Activated CD4-positive, alpha-beta T cell treated with anti-CD3 and anti-CD28 coated beads, Interleukin-2, amount 10 ng/mL, durations not matched to agents 24 days and 14 days (primary cell): ENCODE measurements at regions of chr10 and their contacts with region 1.

Region 1: DNA sequence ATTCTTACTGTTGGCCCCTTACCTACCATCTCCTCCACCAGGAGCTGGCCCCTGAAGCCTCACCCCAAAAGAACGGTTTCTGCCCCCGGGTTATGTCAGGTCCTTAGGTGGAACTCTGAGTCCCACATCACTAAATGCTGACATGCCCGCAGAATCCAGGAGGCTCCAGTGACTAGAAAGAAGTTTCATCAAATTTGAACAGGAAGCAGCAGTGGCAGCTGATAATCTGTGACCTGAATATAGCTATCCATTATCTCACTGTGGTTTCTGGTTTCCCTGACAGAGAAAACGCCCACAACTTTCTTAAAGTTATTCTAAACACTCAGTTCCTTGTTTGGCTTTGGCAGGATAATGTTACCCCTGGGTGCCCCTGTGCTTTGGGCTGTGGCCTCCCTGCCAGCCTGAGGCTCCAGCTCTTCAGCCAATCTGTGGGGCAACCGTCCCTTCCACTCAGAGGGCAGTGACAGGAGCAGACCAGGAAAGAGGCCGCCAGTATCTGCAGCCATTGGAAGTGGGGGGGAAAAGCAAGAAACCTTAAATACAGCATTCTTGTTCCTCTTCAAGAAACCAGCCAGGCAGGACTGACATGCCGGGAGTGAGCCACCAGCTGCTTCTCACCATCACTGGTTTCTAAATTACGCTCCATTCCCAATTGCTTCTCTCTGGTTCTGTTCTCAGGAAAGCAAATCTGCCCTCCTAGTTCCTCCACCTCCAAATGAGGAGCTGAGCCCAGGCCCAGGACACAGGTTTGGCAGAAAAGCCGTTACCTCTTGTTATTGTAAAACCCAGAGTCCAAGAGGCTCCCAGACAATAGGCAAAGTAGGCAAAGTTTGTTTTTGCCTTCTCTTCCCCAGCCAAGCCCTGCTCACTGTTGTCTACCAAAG is 41.2 kb upstream of the VCL start:
- DNase-seq: peak; percentile 80
- H3K4me3 Mint-ChIP-seq: peak overlapping the region; percentile 78
- H3K27ac Mint-ChIP-seq: peak overlapping the region; percentile 86
- H3K4me1 Mint-ChIP-seq: peaks cover 47% of the 10 kb centered on the region
- H3K27me3 Mint-ChIP-seq: peaks cover 2% of the 10 kb centered on the region

Region 2: DNA sequence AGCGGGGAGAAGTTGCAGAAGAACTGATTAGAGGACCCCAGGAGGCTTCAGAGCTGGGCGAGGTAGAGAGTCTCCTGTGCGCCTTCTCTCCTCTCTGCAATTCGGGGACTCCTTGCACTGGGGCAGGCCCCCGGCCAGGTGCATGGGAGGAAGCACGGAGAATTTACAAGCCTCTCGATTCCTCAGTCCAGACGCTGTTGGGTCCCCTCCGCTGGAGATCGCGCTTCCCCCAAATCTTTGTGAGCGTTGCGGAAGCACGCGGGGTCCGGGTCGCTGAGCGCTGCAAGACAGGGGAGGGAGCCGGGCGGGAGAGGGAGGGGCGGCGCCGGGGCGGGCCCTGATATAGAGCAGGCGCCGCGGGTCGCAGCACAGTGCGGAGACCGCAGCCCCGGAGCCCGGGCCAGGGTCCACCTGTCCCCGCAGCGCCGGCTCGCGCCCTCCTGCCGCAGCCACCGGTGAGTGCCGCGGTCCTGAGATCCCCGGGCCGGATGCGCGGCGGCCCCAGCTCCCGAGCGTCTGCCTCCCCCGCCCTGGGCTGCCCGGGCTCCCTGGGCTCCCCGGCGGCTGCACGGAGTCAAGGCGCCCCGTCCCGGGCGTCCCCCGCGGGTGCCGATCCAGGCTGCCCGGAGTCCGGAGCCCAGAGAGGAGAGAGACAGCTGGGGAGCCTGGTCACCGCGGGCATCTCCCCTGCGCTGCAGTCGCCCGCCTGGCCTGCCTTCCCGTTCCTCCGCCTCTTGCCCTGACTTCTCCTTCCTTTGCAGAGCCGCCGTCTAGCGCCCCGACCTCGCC is 45.8 kb before region 1 on chr10 and contains the start of gene PLAU:
- intact Hi-C with region 1: loop called (anchors 5 kb)
- DNase-seq: peak; percentile 84
- H3K4me3 Mint-ChIP-seq: peak within 1 kb of the TSS; percentile 90
- H3K27ac Mint-ChIP-seq: peak within 1 kb of the TSS; percentile 81
- H3K4me1 Mint-ChIP-seq: peaks cover 42% of the 10 kb centered on the region
- H3K27me3 Mint-ChIP-seq: peaks cover 40% of the 10 kb centered on the region
- total RNA-seq, gene PLAU: 0.57 and 0.72 TPM in 2 replicates

Region 3: DNA sequence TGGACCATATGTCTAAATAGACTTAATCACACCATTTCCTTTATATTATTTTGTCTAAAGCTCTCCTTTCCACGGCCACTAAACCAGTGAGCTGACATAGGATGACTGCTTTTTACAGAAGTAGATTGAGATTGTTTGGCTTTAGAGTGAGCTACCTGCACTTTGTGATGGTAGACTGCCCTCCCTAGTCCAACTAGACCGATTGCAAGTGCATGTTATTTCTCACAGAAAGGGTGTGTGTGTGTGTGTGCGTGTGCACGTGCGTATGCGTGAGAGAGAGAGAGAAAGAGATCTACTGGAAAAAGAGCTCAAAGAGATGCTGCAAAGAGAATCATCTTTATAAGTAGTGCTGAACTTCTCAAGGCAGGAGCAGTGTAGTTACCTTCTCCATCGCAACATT is 101.9 kb after region 1 on chr10:
- intact Hi-C with region 1: loop called (anchors 1 kb)
- DNase-seq: peak; percentile 75
- H3K4me3 Mint-ChIP-seq: no peak overlapping the region
- H3K27ac Mint-ChIP-seq: no peak overlapping the region
- H3K4me1 Mint-ChIP-seq: peaks cover 32% of the 10 kb centered on the region
- H3K27me3 Mint-ChIP-seq: no peaks in the 10 kb centered on the region

Region 4: GRCh38 chr10:74081192-74081803 is 124.6 kb after region 1 on chr10:
- intact Hi-C with region 1: loop called (anchors 2 kb)
- DNase-seq: peak; percentile 81
- H3K4me3 Mint-ChIP-seq: no peak overlapping the region
- H3K27ac Mint-ChIP-seq: no peak overlapping the region
- H3K4me1 Mint-ChIP-seq: peaks cover 39% of the 10 kb centered on the region
- H3K27me3 Mint-ChIP-seq: no peaks in the 10 kb centered on the region